ENCODE measurements at regions of chr15 and their contacts with region 1.

Region 1: GRCh38 chr15:40506964-40507571 is 36.3 kb downstream of the CHST14 start:
- DNase-seq: peak; percentile 77 to 85
- H3K4me3 ChIP-seq: no peak overlapping the region
- H3K4me3 Mint-ChIP-seq: peak overlapping the region; percentile 40
- H3K27ac Mint-ChIP-seq: no peak overlapping the region
- H3K4me1 ChIP-seq: 0 out of 2 replicates have a peak, but pooled peaks cover 6% of the 10 kb centered on the region
- H3K4me1 Mint-ChIP-seq: peaks cover 14% of the 10 kb centered on the region
- H3K27me3 ChIP-seq: no peaks in the 10 kb centered on the region; the same call in 1 of the 2 replicates
- H3K27me3 Mint-ChIP-seq: peaks cover 7% of the 10 kb centered on the region
- CTCF ChIP-seq: peak; percentile 56 to 83

Region 2: GRCh38 chr15:40421246-40422157 is 85.6 kb before region 1 on chr15:
- CTCF ChIA-PET with region 1: no interaction called
- POLR2A ChIA-PET with region 1: no interaction called
- intact Hi-C with region 1: no loop called
- DNase-seq: peak; percentile 79 to 87
- H3K4me3 ChIP-seq: peak overlapping the region; percentile 35
- H3K4me3 Mint-ChIP-seq: peak overlapping the region; percentile 9
- H3K27ac Mint-ChIP-seq: no peak overlapping the region
- H3K4me1 ChIP-seq: peaks cover 5% of the 10 kb centered on the region; the same call in 1 of the 2 replicates
- H3K4me1 Mint-ChIP-seq: no peaks in the 10 kb centered on the region
- H3K27me3 ChIP-seq: no peaks in the 10 kb centered on the region
- H3K27me3 Mint-ChIP-seq: no peaks in the 10 kb centered on the region
- CTCF ChIP-seq: peak; percentile 95 to 96

Region 3: DNA sequence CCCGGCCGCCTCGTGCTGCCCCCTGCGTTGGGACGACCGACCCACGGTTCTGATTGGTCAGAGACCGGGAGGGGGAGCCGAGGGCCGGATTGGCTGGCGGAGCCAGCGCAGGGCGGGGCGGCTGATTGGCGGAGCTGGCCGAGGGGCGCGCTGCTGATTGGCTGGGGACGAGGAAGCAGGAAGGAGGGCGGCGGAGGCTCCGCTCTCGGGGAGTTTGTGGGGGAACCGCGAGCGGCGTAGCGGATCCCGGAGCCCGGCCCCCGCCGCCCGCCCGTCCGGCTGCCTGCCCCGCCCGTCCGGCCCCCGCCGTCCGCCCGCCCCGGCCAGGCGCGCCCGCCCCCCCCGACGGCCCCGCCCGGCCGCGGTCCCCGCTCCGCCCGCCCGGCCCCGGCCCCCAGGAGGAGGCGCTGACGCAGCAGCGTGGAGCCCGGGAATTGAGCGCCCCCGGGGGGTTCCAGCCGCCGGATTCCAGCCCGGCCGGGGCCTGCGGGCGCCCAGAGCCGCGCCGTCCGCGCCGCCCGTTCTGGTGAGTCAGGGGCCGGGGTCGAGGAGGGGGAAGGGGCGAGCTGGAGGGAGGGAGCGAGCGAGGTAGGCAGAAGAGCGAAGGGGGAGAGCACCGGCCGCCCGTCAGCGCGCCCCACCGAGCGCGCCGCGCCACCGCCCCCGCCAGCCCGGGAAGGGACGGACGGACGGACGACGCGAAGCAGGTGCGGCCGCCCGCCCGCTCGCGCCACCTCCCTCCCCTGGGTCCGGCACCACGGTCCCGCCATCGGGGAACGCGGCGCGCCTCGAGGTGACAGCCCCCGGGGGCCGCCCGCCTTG is 66.1 kb before region 1 on chr15 and contains the start of gene BAHD1:
- CTCF ChIA-PET with region 1: interaction called, 3 read pairs
- POLR2A ChIA-PET with region 1: no interaction called
- intact Hi-C with region 1: loop called (anchors 1 kb)
- DNase-seq: peak; percentile 97 to 98
- H3K4me3 ChIP-seq: peak within 1 kb of the TSS; percentile 67
- H3K4me3 Mint-ChIP-seq: peak within 1 kb of the TSS; percentile 94
- H3K27ac Mint-ChIP-seq: peak within 1 kb of the TSS; percentile 75
- H3K4me1 ChIP-seq: peaks cover 23% of the 10 kb centered on the region
- H3K4me1 Mint-ChIP-seq: peaks cover 24% of the 10 kb centered on the region
- H3K27me3 ChIP-seq: no peaks in the 10 kb centered on the region
- H3K27me3 Mint-ChIP-seq: no peaks in the 10 kb centered on the region
- CTCF ChIP-seq: peak in 1 of 2 experiments; percentile 20
- total RNA-seq, gene BAHD1: 25.9 and 28.1 TPM in 2 replicates

Region 4: DNA sequence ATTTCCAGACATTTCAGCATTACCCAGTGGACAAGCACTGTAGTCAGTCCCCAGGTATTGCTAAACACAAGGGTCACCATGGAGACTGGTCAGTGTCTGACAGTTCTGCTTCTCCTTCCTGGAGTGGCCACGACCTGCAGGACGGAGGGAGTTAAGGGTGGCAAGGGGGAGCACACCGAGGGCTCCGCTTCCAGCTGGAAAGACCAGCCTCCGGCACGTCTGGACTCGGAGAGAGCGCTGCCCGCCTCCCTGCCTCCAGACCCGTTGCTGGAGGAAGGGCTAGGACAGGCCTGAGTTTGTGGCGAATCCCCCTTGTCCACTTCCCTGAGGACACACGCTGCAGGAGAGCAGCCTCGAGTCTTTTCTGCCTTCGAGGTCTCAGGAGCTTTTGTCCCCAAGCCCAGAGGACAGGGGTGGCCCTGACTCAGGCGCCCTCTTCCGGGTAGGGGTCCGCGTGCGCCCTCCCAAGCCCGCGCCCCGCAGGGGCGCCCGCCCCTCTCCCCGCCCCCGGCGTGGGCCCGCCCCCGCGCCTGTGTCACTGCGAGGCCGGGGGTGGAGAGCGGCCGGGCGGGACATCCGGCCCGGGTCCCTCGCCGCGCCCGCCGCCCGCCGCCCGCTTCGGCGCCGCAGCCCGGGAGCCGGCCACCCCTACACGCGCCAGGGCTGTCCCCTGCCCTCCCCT is 36.5 kb before region 1 on chr15 and contains the start of gene CHST14:
- CTCF ChIA-PET with region 1: no interaction called
- POLR2A ChIA-PET with region 1: no interaction called
- intact Hi-C with region 1: loop called (anchors 1 kb)
- DNase-seq: peak; percentile 71 to 81
- H3K4me3 ChIP-seq: peak within 1 kb of the TSS; percentile 74
- H3K4me3 Mint-ChIP-seq: peak within 1 kb of the TSS; percentile 80
- H3K27ac Mint-ChIP-seq: peak within 1 kb of the TSS; percentile 88
- H3K4me1 ChIP-seq: peaks cover 10% of the 10 kb centered on the region
- H3K4me1 Mint-ChIP-seq: peaks cover 8% of the 10 kb centered on the region
- H3K27me3 ChIP-seq: no peaks in the 10 kb centered on the region
- H3K27me3 Mint-ChIP-seq: no peaks in the 10 kb centered on the region
- CTCF ChIP-seq: peak in 1 of 2 experiments; percentile 17
- total RNA-seq, gene CHST14: 17.0 and 19.6 TPM in 2 replicates

Measured in Caco-2 (cell line).